Ascending aorta (tissue), 2 donors: ENCODE measurements at regions of chr7 and their contacts with region 1.

Region 1: DNA sequence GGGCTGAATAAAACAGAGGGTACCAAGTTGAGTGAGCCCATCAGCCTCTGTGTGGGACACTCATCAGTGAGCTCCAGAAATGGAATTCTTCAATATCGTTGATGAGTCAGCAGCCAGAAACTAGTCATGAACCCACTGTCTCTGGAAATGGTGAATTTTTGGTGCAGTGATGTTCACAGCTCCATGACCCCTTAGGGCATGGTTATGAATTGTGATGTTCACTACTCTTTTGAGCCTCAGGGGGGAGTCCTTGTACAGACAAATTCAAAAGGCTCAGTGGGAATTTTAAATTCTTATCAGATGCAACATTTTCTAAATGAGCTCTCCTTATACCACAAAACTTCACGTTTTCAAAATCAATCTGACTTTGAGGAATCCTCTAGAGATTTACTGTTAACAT is 335.7 kb downstream of the PHTF2 start:
- DNase-seq: no peak
- H3K4me3 ChIP-seq: no peak overlapping the region
- H3K27ac ChIP-seq: no peak overlapping the region
- H3K4me1 ChIP-seq: no peaks in the 10 kb centered on the region
- H3K27me3 ChIP-seq: no peaks in the 10 kb centered on the region
- CTCF ChIP-seq: peak in 2 of 3 experiments; percentile 44 to 65

Region 2: DNA sequence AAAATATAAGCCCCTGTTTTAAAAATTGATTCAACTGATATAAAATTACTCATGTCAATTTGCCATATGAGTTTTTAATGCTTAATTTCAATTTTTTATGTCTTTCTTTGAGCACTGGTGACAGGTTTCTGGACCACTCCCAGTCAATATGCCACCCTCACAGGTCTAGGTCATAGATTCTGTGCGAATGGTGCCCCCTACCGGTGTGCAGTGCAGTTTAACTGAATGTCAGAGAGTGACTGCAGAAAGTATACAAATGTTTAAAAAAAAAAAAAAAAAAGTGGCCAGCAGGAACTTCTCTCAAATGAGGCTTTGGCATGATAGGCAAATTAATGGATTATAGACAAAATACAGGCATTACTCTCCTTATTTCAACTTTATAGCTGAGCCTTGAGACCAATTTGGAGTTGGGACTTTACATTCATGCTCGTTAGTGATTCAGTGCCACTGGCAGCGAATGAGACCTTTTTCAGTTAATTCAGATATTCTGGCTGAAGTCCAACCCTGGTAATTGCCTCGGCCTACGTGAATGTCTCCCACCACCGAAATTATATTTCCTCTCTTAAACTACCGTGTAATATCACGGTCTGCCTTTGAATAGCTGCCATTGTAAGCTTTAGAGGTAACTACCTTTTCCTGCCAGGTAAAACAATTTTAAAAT is 91.9 kb after region 1 on chr7:
- intact Hi-C with region 1: loop called (anchors 2 kb)
- DNase-seq: peak in 1 of 2 donors; percentile 74
- H3K4me3 ChIP-seq: no peak overlapping the region
- H3K27ac ChIP-seq: peak overlapping the region in 1 of 2 donors; percentile 55
- H3K4me1 ChIP-seq: peaks cover 0 to 12% of the 10 kb centered on the region in 2 donors
- H3K27me3 ChIP-seq: no peaks in the 10 kb centered on the region
- CTCF ChIP-seq: peak in 2 of 3 experiments; percentile 45 to 49